ENCODE measurements at regions of chr2 and their contacts with region 1.

Region 1: DNA sequence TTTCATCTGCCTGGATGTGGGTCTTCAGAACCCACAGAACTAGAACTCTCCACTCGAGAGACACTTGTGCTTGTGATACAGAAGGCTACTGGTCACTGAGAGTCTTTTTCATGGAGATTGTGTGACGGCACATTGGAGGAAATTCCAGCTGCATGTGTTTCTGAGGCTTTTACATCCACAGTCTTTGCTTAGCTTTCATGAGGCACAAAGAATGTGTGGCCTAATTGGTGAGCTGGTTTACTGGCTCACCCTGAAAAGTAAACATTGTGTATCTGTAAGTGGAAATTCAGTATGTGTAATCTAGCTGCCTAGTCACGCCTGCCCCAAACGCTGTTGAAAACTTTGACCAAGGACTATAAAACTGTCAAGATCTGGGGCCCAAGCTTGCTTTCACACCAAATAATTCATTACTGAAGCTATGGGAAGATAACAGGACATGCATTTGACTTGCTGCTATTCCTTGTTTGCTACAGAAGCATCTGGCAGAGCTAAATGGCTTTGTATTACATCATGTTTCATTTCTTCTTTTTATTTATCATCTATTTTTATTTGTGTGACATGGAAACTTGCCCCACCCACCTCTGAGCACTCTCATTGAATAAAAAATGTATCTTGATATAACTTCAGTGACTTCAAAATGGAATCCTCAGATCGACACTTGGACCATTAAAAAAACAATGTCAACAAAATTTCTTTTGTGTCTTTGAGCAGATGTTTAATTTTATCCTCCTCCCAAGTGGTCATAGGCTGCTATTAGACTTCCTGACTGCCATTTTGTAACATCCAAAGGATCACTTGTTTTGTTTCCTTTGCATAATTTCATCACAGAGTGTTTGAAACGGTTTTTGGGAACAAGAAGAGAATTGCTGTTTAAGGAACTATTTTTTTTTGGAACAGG is 80.2 kb downstream of the EFEMP1 start:
- DNase-seq: peak; percentile 89 to 92
- H3K4me3 ChIP-seq: no peak overlapping the region
- H3K4me3 Mint-ChIP-seq: peak overlapping the region; percentile 11
- H3K27ac Mint-ChIP-seq: no peak overlapping the region
- H3K4me1 ChIP-seq: peaks cover 79% of the 10 kb centered on the region
- H3K4me1 Mint-ChIP-seq: peaks cover 32% of the 10 kb centered on the region
- H3K27me3 ChIP-seq: no peaks in the 10 kb centered on the region
- H3K27me3 Mint-ChIP-seq: no peaks in the 10 kb centered on the region
- CTCF ChIP-seq: no peak

Region 2: GRCh38 chr2:55519938-55520885 is 323.1 kb before region 1 on chr2:
- CTCF ChIA-PET with region 1: no interaction called
- POLR2A ChIA-PET with region 1: no interaction called
- intact Hi-C with region 1: no loop called
- DNase-seq: peak in 1 of 2 experiments; percentile 44
- H3K4me3 ChIP-seq: peak overlapping the region; percentile 65
- H3K4me3 Mint-ChIP-seq: peak overlapping the region; percentile 94
- H3K27ac Mint-ChIP-seq: peak overlapping the region; percentile 88
- H3K4me1 ChIP-seq: no peaks in the 10 kb centered on the region
- H3K4me1 Mint-ChIP-seq: peaks cover 7% of the 10 kb centered on the region
- H3K27me3 ChIP-seq: no peaks in the 10 kb centered on the region
- H3K27me3 Mint-ChIP-seq: no peaks in the 10 kb centered on the region
- CTCF ChIP-seq: no peak

Region 3: GRCh38 chr2:55712477-55713060 is 130.8 kb before region 1 on chr2:
- CTCF ChIA-PET with region 1: interaction called, 7 read pairs
- POLR2A ChIA-PET with region 1: no interaction called
- intact Hi-C with region 1: loop called (anchors 1 kb)
- DNase-seq: peak; percentile 93 to 96
- H3K4me3 ChIP-seq: no peak overlapping the region
- H3K4me3 Mint-ChIP-seq: peak overlapping the region; percentile 45
- H3K27ac Mint-ChIP-seq: peak overlapping the region; percentile 86
- H3K4me1 ChIP-seq: peaks cover 51% of the 10 kb centered on the region
- H3K4me1 Mint-ChIP-seq: peaks cover 55% of the 10 kb centered on the region
- H3K27me3 ChIP-seq: no peaks in the 10 kb centered on the region
- H3K27me3 Mint-ChIP-seq: no peaks in the 10 kb centered on the region
- CTCF ChIP-seq: no peak

Region 4: DNA sequence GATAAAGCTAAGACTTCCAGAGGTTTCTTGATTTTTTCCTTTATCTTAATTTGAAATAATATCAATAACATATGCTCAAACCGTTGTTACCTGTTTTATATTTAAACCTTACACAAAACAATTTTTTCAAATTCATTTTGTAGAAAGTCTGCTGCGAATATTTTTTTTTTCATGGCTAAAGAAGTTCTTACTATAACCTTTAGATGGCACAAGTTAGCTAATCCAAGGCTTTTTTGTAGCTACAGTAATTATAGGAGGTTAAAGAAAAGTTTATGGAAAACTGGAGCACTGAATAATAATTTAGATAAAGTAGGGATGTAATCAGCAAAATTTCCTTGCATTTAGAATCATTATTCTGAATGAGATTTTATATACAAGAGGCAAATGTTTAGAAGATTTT is 71.7 kb before region 1 on chr2:
- CTCF ChIA-PET with region 1: interaction called, 8 read pairs
- POLR2A ChIA-PET with region 1: no interaction called
- intact Hi-C with region 1: loop called (anchors 1 kb)
- DNase-seq: peak in 1 of 2 experiments; percentile 14
- H3K4me3 ChIP-seq: no peak overlapping the region
- H3K4me3 Mint-ChIP-seq: no peak overlapping the region
- H3K27ac Mint-ChIP-seq: peak overlapping the region; percentile 18
- H3K4me1 ChIP-seq: peaks cover 7% of the 10 kb centered on the region
- H3K4me1 Mint-ChIP-seq: peaks cover 13% of the 10 kb centered on the region
- H3K27me3 ChIP-seq: no peaks in the 10 kb centered on the region
- H3K27me3 Mint-ChIP-seq: no peaks in the 10 kb centered on the region
- CTCF ChIP-seq: peak; percentile 64

Region 5: GRCh38 chr2:55801436-55801835 is 41.9 kb before region 1 on chr2:
- CTCF ChIA-PET with region 1: no interaction called
- POLR2A ChIA-PET with region 1: no interaction called
- intact Hi-C with region 1: loop called (anchors 2 kb)
- DNase-seq: no peak
- H3K4me3 ChIP-seq: no peak overlapping the region
- H3K4me3 Mint-ChIP-seq: no peak overlapping the region
- H3K27ac Mint-ChIP-seq: no peak overlapping the region
- H3K4me1 ChIP-seq: no peaks in the 10 kb centered on the region
- H3K4me1 Mint-ChIP-seq: no peaks in the 10 kb centered on the region
- H3K27me3 ChIP-seq: no peaks in the 10 kb centered on the region
- H3K27me3 Mint-ChIP-seq: no peaks in the 10 kb centered on the region
- CTCF ChIP-seq: no peak

Region 6: GRCh38 chr2:55923091-55923981 is 80.0 kb after region 1 on chr2 and contains the start of gene EFEMP1:
- CTCF ChIA-PET with region 1: no interaction called
- POLR2A ChIA-PET with region 1: no interaction called
- intact Hi-C with region 1: no loop called
- DNase-seq: no peak
- H3K4me3 ChIP-seq: no peak within 1 kb of the TSS
- H3K4me3 Mint-ChIP-seq: no peak within 1 kb of the TSS
- H3K27ac Mint-ChIP-seq: no peak within 1 kb of the TSS
- H3K4me1 ChIP-seq: no peaks in the 10 kb centered on the region
- H3K4me1 Mint-ChIP-seq: no peaks in the 10 kb centered on the region
- H3K27me3 ChIP-seq: no peaks in the 10 kb centered on the region; the same call in 1 of the 2 replicates
- H3K27me3 Mint-ChIP-seq: no peaks in the 10 kb centered on the region
- CTCF ChIP-seq: no peak
- total RNA-seq, gene EFEMP1: not detected in 2 replicates